Kidney (tissue), 22 donors: ENCODE measurements at regions of chr4 and their contacts with region 1.

Region 1: DNA sequence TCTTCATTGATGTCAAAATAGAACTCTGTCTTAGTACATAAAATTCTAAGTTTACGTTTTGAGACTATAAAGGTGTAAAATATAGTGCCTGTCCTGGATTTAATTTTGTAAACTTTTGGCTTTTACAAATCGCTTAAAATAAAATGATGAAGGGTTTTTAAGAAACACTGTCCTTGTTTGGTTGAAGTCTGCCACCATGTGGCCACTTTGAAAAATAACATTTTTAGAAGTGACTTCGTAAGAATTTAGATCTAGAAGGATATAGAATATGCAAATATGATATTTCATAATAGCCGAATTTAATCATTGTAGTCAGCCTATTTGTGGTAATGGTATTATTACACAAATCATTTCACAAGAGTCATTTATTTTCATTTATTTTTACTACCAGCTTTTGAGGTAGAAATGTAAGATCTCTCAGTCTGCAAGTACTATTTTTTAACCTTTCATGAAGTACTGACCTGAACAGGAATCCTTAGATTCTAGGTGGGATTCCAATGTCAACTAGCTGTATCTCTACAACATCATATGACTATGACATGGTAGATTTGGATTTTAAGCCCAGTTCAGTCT is 31.0 kb upstream of the FAT4 start:
- DNase-seq: peak in 2 of 5 donors; percentile 31 to 36
- H3K4me3 ChIP-seq: no peak overlapping the region
- H3K27ac ChIP-seq: no peak overlapping the region
- H3K4me1 ChIP-seq: no peaks in the 10 kb centered on the region
- H3K27me3 ChIP-seq: no peaks in the 10 kb centered on the region
- CTCF ChIP-seq: peak; percentile 43

Region 2: DNA sequence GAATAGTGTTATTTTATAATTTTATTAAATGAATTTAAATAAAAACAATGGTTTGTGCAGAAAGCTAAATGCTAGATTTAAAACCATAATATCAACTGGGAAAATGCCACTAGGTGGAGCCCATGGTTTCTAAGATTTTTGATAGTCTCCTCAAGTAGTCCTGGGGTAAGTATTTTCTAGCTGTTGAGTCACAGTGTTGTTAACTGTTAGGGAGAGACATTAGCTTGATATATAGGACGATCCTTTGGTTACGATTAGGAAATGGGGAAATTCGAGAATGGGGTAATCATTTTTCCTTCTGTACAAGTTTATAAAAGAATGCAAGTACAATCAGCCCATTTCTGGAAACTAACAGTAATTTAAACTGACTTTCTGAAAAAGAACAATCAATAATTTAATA is 949.7 kb before region 1 on chr4:
- intact Hi-C with region 1: loop called (anchors 10 kb)
- DNase-seq: peak in 3 of 5 donors; percentile 30 to 85 (median 78)
- H3K4me3 ChIP-seq: no peak overlapping the region
- H3K27ac ChIP-seq: no peak overlapping the region
- H3K4me1 ChIP-seq: no peaks in the 10 kb centered on the region
- H3K27me3 ChIP-seq: no peaks in the 10 kb centered on the region
- CTCF ChIP-seq: peak; percentile 54

Region 3: DNA sequence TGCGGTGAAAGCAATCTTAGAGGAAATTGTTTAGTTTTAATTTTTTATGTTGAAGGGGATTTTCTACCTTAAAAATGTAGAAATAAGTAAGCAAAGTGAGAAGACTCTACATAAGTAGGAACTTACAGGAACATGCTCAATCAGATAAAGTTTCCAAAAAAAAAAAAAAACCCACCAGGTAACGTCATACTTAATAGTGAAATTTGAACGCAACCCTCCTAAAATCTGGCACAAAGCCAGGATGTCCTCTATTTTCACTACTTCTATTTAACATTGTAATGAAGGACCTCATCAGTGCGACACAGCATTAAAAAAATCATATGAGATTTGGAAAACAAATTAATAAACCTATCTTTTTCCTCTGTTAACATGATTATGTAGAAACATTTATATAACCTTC is 104.1 kb before region 1 on chr4:
- intact Hi-C with region 1: no loop called
- DNase-seq: no peak
- H3K4me3 ChIP-seq: no peak overlapping the region
- H3K27ac ChIP-seq: no peak overlapping the region
- H3K4me1 ChIP-seq: no peaks in the 10 kb centered on the region
- H3K27me3 ChIP-seq: no peaks in the 10 kb centered on the region
- CTCF ChIP-seq: no peak

Region 4: GRCh38 chr4:125551466-125551865 is 267.7 kb after region 1 on chr4:
- intact Hi-C with region 1: no loop called
- DNase-seq: no peak
- H3K4me3 ChIP-seq: no peak overlapping the region
- H3K27ac ChIP-seq: no peak overlapping the region
- H3K4me1 ChIP-seq: no peaks in the 10 kb centered on the region
- H3K27me3 ChIP-seq: no peaks in the 10 kb centered on the region
- CTCF ChIP-seq: no peak

Region 5: GRCh38 chr4:125642645-125643044 is 358.9 kb after region 1 on chr4:
- intact Hi-C with region 1: no loop called
- DNase-seq: no peak
- H3K4me3 ChIP-seq: no peak overlapping the region
- H3K27ac ChIP-seq: no peak overlapping the region
- H3K4me1 ChIP-seq: peaks cover 0 to 11% (median 6%) of the 10 kb centered on the region in 3 donors
- H3K27me3 ChIP-seq: no peaks in the 10 kb centered on the region
- CTCF ChIP-seq: no peak